ENCODE measurements at regions of chr15 and their contacts with region 1.

Region 1: GRCh38 chr15:55588070-55588814 is at the start of gene PYGO1:
- H3K4me3 ChIP-seq: peak within 1 kb of the TSS; percentile 63
- H3K27ac ChIP-seq: peak within 1 kb of the TSS; percentile 88
- H3K4me1 ChIP-seq: no peaks in the 10 kb centered on the region
- CTCF ChIP-seq: peak; percentile 17; the same call in 1 of the 2 replicates

Region 2: DNA sequence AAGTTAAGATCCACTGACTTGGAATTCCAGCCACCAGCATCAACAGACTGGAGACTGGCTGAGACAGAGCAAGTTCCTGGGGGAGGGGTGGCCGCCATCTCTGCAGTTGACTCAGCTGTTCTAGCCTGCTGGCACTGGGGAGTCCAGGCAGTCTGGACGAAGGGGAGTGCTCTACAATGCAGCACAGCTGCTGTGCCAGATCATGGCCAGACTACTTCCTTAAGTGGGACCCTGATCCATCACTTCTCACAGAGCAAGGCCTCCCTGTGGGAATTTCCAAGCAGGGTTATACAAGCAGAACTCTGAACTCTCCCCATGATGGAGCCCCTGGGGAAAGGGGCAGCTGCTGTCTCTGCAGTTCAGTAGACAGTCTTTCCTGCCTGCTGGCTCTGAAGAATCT is 35.3 kb before region 1 on chr15:
- CTCF ChIA-PET with region 1: no interaction called
- POLR2A ChIA-PET with region 1: no interaction called
- H3K4me3 ChIP-seq: no peak overlapping the region
- H3K27ac ChIP-seq: no peak overlapping the region
- H3K4me1 ChIP-seq: no peaks in the 10 kb centered on the region
- CTCF ChIP-seq: no peak

Region 3: GRCh38 chr15:55613727-55614126 is 25.5 kb after region 1 on chr15:
- CTCF ChIA-PET with region 1: no interaction called
- POLR2A ChIA-PET with region 1: no interaction called
- H3K4me3 ChIP-seq: no peak overlapping the region
- H3K27ac ChIP-seq: no peak overlapping the region
- H3K4me1 ChIP-seq: peaks cover 2% of the 10 kb centered on the region; the same call in 1 of the 2 replicates
- CTCF ChIP-seq: no peak

Region 4: DNA sequence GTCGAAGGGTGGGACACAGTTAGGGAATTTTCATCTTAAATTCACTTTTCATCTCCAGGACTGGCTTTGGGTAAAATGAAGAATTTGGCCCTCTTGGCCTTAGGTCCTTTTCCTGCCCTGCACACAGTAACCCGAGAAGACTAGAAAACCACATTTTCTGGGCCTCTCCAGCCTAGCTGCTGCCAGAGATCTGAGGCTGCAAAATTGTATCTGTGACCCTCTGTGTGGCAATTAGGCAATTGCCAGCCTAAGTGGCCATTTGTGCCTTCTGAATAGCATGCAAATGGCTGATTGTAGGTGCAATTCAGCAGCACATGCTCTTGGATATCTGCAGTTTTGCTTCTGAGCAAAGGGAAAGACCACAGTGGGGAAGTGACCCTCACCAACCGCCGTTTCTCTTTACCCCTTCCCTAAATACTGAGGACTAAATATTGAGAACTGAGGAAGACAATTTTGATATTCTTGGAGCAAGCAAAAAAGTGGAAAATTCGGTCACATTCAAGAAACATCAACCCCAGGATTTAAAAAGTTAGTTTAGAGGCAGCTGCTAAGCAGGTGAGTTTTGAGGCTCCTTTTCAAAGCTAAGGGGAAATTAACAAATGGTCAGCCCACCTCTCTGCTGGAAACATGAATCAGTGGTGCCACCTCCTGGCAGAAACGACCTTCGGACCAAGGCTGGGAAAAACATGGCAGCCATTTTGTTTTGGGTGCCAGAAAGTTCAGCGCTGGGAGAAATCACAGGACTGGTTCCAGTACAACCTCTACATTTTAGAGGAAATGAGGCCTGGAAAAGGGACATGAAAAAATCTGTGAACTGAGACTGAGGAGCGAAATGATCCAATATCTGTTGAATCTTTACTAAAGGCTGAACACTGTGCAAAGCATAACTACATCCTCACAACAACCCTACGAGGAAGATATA is 211.3 kb after region 1 on chr15:
- CTCF ChIA-PET with region 1: interaction called, 10 read pairs
- POLR2A ChIA-PET with region 1: no interaction called
- H3K4me3 ChIP-seq: no peak overlapping the region
- H3K27ac ChIP-seq: no peak overlapping the region
- H3K4me1 ChIP-seq: peaks cover 4% of the 10 kb centered on the region
- CTCF ChIP-seq: peak; percentile 52; the same call in 1 of the 2 replicates